Cardiac septum (tissue), 1 donor: ENCODE measurements at regions of chr15 and their contacts with region 1.

Region 1: GRCh38 chr15:70679919-70680231 is 83.5 kb downstream of the UACA start:
- DNase-seq: no peak

Region 2: DNA sequence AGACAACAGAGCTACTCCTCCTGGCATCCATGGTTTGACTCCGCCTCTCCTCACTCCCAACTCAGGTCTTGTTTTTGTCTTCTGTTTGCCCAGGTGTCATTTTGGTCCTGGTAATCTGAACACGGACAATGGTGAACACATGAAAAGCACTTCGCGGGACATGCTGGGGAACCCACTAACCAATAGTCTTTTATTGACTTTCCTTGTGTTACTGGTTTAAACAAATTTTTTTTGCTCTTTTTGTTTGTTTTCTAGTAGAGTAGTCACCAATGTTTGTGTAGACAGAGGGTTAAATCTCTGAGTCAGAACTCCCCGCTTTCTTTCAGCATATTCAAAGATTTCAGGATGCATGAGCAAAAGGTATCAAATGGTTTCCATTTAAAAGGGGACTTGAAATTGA is 135.8 kb after region 1 on chr15:
- intact Hi-C with region 1: loop called (anchors 1 kb)
- DNase-seq: no peak

Region 3: DNA sequence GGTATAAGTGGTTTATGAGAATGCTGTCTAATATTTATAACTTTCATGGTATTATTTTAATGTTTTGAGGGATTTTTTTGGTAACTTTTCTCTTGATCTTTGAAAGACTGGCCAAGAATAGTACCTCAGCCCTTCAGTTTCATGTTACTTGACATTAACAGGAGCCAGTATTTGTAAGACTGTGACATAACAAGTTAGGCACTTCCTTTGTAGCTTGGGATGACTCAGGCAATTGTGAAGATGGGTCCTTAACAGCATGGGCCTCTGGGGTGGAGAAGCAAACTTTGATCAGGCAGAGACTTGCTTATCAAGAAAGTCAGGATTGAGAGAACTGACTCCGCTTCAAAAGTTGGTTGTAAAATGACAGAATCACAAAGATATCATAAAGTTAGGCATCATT is 222.2 kb after region 1 on chr15:
- intact Hi-C with region 1: no loop called
- DNase-seq: no peak